GM10248 (cell line): ENCODE measurements at regions of chr3 and their contacts with region 1.

Region 1: GRCh38 chr3:158950178-158950901 is 148.5 kb downstream of the MFSD1 start:
- DNase-seq: no peak
- CTCF ChIP-seq: no peak

Region 2: GRCh38 chr3:158961911-158962310 is 11.6 kb after region 1 on chr3:
- CTCF ChIA-PET with region 1: interaction called, 14 read pairs
- POLR2A ChIA-PET with region 1: no interaction called
- DNase-seq: no peak
- CTCF ChIP-seq: no peak